Activated CD8-positive, alpha-beta T cell treated with anti-CD3 and anti-CD28 coated beads for 36 hours (primary cell): ENCODE measurements at regions of chr7 and their contacts with region 1.

Region 1: DNA sequence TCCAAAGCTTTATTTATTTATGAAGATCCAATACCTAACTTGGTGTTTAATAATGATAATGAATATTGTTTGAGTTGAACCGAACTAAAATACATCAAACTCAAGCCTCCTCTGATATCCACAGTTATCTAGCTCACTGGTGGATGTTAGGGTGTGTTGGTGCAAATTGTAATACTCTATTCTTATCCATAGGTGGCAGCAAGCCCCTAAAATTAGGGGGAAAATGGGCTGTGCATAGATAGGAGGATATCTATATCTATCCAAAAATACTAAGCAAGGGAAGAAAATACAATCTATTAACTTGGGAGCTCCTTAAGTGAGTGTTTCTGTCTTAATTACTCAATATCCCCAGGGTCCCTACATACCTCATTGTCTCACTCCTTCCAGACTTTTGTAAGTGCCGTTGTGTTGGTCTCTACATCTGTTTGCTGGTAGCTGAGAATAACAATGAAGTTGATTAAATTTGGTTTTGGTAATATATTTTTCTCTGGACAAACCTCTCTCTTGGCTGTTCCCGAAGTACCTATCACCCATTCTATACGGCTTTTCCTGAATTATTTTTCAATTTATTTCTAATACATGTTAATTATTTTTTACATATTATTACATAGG is 55.0 kb upstream of the VWDE start:
- DNase-seq: no peak
- ATAC-seq: peak; percentile 97
- H3K4me3 Mint-ChIP-seq: no peak overlapping the region
- H3K27ac Mint-ChIP-seq: no peak overlapping the region
- H3K4me1 Mint-ChIP-seq: no peaks in the 10 kb centered on the region
- H3K27me3 Mint-ChIP-seq: peaks cover 5% of the 10 kb centered on the region
- CTCF ChIP-seq: peak; percentile 67

Region 2: GRCh38 chr7:11875635-11876034 is 583.0 kb before region 1 on chr7:
- CTCF ChIA-PET with region 1: no interaction called
- POLR2A ChIA-PET with region 1: no interaction called
- intact Hi-C with region 1: no loop called
- DNase-seq: no peak
- ATAC-seq: no peak
- H3K4me3 Mint-ChIP-seq: no peak overlapping the region
- H3K27ac Mint-ChIP-seq: no peak overlapping the region
- H3K4me1 Mint-ChIP-seq: no peaks in the 10 kb centered on the region
- H3K27me3 Mint-ChIP-seq: no peaks in the 10 kb centered on the region
- CTCF ChIP-seq: no peak

Region 3: DNA sequence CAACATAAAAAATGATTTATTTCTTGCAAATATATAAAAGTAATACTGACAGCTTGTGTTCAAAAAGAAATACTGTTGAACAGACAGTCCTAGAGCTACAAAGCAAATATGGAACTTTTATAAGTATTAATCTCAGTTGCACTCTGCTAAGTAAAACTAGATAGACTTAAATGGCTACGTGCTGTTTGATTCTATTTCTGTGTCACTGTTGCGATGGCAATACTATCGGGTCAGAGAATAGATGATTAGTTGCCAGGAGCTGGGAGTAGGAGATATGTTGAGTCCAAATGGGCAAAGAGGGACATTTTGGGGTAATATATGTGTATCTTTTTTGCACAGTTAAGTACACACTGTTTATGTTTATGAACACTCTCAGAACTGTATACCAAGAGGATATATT is 13.8 kb before region 1 on chr7:
- CTCF ChIA-PET with region 1: interaction called, 17 read pairs
- POLR2A ChIA-PET with region 1: no interaction called
- intact Hi-C with region 1: no loop called
- DNase-seq: no peak
- ATAC-seq: no peak
- H3K4me3 Mint-ChIP-seq: no peak overlapping the region
- H3K27ac Mint-ChIP-seq: no peak overlapping the region
- H3K4me1 Mint-ChIP-seq: no peaks in the 10 kb centered on the region
- H3K27me3 Mint-ChIP-seq: peaks cover 2% of the 10 kb centered on the region
- CTCF ChIP-seq: no peak

Region 4: GRCh38 chr7:12475362-12476063 is 16.9 kb after region 1 on chr7:
- CTCF ChIA-PET with region 1: interaction called, 26 read pairs
- POLR2A ChIA-PET with region 1: no interaction called
- intact Hi-C with region 1: no loop called
- DNase-seq: no peak
- ATAC-seq: no peak
- H3K4me3 Mint-ChIP-seq: no peak overlapping the region
- H3K27ac Mint-ChIP-seq: no peak overlapping the region
- H3K4me1 Mint-ChIP-seq: no peaks in the 10 kb centered on the region
- H3K27me3 Mint-ChIP-seq: no peaks in the 10 kb centered on the region
- CTCF ChIP-seq: no peak

Region 5: DNA sequence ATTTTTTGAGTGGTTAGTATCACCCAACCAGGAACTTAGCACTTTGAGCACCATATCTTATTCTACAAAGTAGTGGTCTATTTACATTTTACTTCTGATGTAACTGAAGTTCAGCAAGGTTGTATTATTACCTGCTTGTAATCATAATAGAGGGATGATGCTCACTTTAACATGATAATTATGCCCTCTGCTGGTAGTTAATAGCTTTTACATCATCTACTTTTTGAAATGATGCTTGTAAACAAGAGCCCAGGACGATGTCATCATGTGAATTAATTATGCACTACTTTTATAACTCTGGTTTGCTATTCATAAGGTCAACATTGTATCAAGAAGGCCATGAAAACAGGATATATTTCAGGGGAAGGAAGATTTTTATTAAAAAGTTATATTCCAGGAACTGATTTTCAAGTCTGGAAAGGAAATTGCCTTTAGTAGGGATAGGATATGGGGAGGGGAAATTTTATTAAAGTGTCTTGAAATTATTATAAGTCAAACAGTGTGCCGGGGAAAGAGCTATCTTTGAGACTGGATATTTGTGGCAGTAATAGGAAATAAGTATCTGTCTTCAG is 31.6 kb after region 1 on chr7:
- CTCF ChIA-PET with region 1: interaction called, 90 read pairs
- POLR2A ChIA-PET with region 1: no interaction called
- intact Hi-C with region 1: loop called (anchors 2 kb)
- DNase-seq: no peak
- ATAC-seq: peak; percentile 64
- H3K4me3 Mint-ChIP-seq: no peak overlapping the region
- H3K27ac Mint-ChIP-seq: no peak overlapping the region
- H3K4me1 Mint-ChIP-seq: no peaks in the 10 kb centered on the region
- H3K27me3 Mint-ChIP-seq: peaks cover 5% of the 10 kb centered on the region
- CTCF ChIP-seq: peak; percentile 56